Uterus (tissue), 4 donors: ENCODE measurements at regions of chr11 and their contacts with region 1.

Region 1: GRCh38 chr11:109978895-109979294 is 114.3 kb upstream of the ZC3H12C start:
- DNase-seq: no peak
- H3K4me3 ChIP-seq: no peak overlapping the region
- H3K27ac ChIP-seq: no peak overlapping the region
- H3K4me1 ChIP-seq: no peaks in the 10 kb centered on the region
- H3K27me3 ChIP-seq: no peaks in the 10 kb centered on the region
- CTCF ChIP-seq: no peak
- POLR2A ChIP-seq: no peak

Region 2: DNA sequence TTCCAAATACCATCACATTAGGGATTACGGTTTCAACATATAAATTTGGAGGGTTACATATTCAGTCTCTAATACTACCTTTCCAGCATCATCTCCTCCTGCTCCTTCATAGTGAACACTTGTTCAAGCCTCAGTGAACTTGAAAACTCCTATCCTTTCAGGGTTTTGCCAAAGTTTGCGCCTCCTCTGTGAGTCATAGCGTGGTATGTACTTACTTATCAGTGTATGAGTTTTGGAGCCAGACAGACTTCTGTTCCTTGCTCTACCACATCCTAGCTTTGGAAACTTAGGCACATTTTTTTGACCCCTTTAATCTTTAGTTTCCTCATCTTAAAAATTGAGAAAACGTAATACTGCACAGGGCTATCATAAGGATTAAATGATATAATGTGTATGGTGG is 45.8 kb before region 1 on chr11:
- intact Hi-C with region 1: loop called (anchors 2 kb)
- DNase-seq: no peak
- H3K4me3 ChIP-seq: no peak overlapping the region
- H3K27ac ChIP-seq: no peak overlapping the region
- H3K4me1 ChIP-seq: no peaks in the 10 kb centered on the region
- H3K27me3 ChIP-seq: no peaks in the 10 kb centered on the region
- CTCF ChIP-seq: no peak
- POLR2A ChIP-seq: no peak